T-cell (primary cell): ENCODE measurements at regions of chr4 and their contacts with region 1.

Region 1: DNA sequence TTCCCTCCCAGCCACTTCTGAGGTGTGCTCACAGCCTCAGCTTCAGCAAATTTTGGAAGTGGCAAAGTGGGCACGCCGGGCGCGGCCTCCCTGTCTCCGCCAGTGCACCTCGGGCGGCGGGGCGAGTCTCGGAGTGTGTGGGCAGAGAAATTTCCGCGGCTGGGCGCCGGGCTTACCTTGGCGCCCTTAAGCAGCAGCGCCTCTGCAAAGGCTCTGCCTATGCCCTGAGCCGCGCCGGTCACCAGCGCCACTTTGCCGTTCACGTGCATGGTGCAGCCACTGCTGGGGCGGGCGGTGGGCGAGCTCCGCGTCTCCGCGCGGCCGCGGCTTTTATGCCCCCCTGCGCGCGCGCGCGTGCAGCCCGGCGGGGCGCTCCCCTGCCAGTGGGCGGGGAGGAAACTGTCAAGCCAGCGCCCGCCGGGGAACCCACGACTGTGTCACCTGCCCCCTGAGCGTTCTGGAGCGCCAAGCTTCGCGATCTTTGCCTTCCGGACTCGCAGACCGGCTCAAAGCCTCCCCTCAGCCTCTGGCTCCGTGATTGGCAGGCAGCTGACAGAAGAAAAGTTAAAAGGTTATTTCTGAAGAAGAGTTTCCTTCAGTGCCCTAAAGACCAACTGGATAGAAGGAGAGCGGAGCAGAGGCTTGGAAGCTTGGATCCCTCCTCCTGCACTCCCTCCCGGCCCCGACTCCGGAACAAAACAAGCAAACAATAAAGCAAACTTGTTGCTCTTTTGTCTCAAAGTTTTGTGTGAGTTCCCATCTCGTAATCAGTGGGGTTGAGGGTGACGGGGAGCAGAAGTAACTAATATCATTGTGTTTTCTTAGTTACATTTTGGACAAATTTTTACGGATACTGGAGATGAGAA is at the start of gene HPGD:
- DNase-seq: peak; percentile 36 to 85 (median 63)
- ATAC-seq: peak; percentile 86 to 95 (median 91)
- H3K4me3 ChIP-seq: peak within 1 kb of the TSS; percentile 65 to 68
- H3K4me3 Mint-ChIP-seq: peak within 1 kb of the TSS; percentile 81 to 88 (median 83)
- H3K27ac ChIP-seq: peak within 1 kb of the TSS; percentile 59
- H3K27ac Mint-ChIP-seq: peak within 1 kb of the TSS; percentile 73 to 75
- H3K4me1 ChIP-seq: peaks cover 12 to 16% of the 10 kb centered on the region in 2 experiments
- H3K4me1 Mint-ChIP-seq: peaks cover 30 to 43% (median 33%) of the 10 kb centered on the region in 3 donors
- H3K27me3 ChIP-seq: peaks cover 0 to 13% of the 10 kb centered on the region in 2 experiments
- H3K27me3 Mint-ChIP-seq: peaks cover 5 to 32% of the 10 kb centered on the region in 2 donors
- total RNA-seq, gene HPGD: 3.5 to 14.6 (median 7.8) TPM

Region 2: DNA sequence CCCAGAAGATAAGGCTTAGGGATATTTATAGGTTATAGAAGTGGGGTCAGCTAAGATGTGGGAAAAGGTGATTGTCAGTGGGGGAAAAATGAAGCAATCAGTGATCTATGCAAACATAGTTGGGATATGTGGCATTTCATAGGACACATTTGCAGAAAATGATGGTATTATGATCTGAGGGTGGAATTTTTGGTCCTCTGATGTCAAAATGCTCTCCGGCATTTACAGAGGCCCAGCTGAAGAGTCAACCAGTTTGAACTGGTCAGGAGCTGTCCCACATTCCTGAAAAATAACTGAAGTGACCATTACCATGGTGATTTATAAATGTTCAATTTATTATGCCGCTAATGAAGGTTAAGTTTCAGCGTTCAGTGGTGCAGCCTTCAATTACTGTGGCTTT is 12.1 kb after region 1 on chr4:
- CTCF ChIA-PET with region 1: no interaction called
- POLR2A ChIA-PET with region 1: interaction called in 1 of 2 experiments, 12 read pairs
- DNase-seq: no peak
- ATAC-seq: no peak
- H3K4me3 ChIP-seq: no peak overlapping the region
- H3K4me3 Mint-ChIP-seq: no peak overlapping the region
- H3K27ac ChIP-seq: no peak overlapping the region
- H3K27ac Mint-ChIP-seq: no peak overlapping the region
- H3K4me1 ChIP-seq: no peaks in the 10 kb centered on the region
- H3K4me1 Mint-ChIP-seq: no peaks in the 10 kb centered on the region
- H3K27me3 ChIP-seq: no peaks in the 10 kb centered on the region
- H3K27me3 Mint-ChIP-seq: peaks cover 0 to 5% of the 10 kb centered on the region in 2 donors

Region 3: DNA sequence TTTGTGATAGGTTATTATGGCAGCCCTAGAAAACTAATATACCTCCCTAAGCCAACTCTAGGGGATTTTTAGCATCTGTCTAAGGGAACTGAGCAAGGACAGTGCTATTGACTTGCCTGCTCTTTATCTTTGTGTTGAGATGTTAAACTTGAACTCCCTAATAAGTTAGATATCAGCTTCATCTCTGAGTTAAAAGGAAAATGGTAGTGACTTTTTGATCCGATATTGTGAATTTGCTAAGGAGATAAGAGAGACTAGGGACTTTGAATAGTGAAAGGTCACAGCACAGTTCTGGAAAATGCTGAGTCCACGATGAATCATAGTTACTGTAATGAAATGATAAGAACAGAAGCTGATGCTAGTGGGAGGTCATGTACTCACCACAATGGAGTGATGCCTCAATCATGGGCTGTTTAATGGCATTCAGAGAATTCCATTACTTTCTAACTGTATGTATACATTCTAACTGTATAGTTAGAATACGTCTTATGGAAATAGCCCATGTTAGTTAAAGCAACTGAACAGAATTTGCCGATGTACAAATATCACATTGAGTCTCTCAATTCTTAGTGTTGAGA is 159.4 kb after region 1 on chr4:
- CTCF ChIA-PET with region 1: no interaction called
- POLR2A ChIA-PET with region 1: no interaction called
- DNase-seq: no peak
- ATAC-seq: no peak
- H3K4me3 ChIP-seq: no peak overlapping the region
- H3K4me3 Mint-ChIP-seq: no peak overlapping the region
- H3K27ac ChIP-seq: no peak overlapping the region
- H3K27ac Mint-ChIP-seq: no peak overlapping the region
- H3K4me1 ChIP-seq: no peaks in the 10 kb centered on the region
- H3K4me1 Mint-ChIP-seq: no peaks in the 10 kb centered on the region
- H3K27me3 ChIP-seq: no peaks in the 10 kb centered on the region
- H3K27me3 Mint-ChIP-seq: peaks cover 0 to 3% of the 10 kb centered on the region in 2 donors

Region 4: DNA sequence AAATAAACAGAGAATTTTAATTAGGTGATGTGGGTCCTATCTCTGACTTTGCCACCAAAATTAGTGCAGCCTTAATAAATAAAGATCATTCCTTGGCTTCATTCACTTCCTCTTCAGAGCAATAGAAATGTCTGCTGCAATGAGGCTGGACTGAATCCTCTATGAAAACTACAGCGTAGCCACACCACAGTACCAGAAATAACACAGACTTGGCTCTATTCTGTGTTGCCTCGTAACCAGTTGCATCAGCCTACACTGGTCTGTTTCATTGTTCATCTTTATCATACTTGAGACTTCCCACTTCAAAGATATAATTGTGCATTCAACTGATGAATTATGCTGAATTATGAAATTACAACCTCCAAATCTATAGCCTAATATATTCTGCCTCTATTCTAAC is 290.9 kb after region 1 on chr4:
- CTCF ChIA-PET with region 1: no interaction called
- POLR2A ChIA-PET with region 1: no interaction called
- DNase-seq: no peak
- ATAC-seq: no peak
- H3K4me3 ChIP-seq: no peak overlapping the region
- H3K4me3 Mint-ChIP-seq: no peak overlapping the region
- H3K27ac ChIP-seq: no peak overlapping the region
- H3K27ac Mint-ChIP-seq: no peak overlapping the region
- H3K4me1 ChIP-seq: no peaks in the 10 kb centered on the region
- H3K4me1 Mint-ChIP-seq: no peaks in the 10 kb centered on the region
- H3K27me3 ChIP-seq: no peaks in the 10 kb centered on the region
- H3K27me3 Mint-ChIP-seq: no peaks in the 10 kb centered on the region